ENCODE measurements at regions of chr5 and their contacts with region 1.

Region 1: DNA sequence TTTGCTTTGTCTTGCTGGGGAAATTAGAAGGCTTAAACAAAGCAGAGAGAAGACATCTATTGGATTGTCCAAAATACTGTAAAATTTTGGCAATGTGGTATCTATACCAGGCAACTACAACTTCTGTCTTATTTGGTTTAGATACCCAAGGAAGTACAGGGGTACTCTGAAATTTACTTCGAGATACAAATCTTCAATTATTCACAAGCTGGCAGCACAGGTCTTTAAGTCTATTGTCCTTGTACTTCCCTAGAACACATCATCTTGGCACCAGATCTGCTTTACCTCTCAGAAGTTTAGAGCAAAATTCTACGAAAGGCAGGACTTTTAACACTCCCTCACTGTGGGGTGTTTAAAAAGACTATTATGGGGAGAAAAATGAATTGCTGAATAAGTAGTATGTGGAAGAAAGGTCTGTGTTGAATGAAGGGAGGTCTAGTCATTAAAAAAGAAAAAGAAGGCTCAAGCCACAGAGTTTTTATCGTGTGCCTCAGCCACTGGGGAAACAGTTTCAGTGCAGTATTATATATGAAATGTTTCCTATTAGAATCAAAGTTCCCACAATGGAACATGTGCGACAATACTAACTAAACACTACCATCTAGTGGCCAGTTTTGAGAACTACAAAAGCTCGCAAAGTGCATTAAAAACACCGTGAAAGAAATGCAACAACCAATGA is 93.7 kb downstream of the PDE4D start:
- DNase-seq: no peak
- H3K4me3 ChIP-seq: no peak overlapping the region
- H3K27me3 ChIP-seq: peaks cover under 1% of the 10 kb centered on the region; the same call in 1 of the 2 replicates
- CTCF ChIP-seq: peak; percentile 60

Region 2: DNA sequence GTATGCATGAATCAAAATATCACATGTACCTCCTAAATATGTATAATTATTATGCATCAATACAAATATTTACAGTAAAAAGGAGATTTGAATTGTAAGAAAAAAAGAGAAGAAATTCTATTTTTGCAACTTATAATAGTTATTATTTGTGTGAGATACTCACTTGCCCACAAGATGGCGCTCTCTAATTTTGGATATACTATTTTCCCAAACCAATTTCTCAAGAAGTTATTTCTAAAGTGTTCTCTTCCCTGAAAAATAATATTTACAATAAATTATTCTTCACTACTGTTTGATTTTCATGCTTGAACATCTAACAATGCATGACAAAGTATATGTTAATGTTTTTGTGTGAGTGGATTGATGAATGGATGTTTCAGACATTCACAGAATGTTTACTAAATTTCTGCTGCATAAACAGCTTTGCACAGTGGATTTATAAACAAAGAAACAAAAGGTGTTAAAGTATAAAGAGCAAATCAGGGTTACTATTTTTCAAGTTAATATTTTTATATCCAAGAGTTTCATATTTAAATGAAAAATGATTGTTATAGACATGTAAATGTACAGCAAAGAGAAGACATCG is 409.6 kb before region 1 on chr5:
- CTCF ChIA-PET with region 1: interaction called, 22 read pairs
- POLR2A ChIA-PET with region 1: no interaction called
- DNase-seq: no peak
- H3K4me3 ChIP-seq: no peak overlapping the region
- H3K27me3 ChIP-seq: peaks cover 2% of the 10 kb centered on the region; the same call in 1 of the 2 replicates
- CTCF ChIP-seq: peak; percentile 55

Region 3: GRCh38 chr5:59506285-59506877 is 293.4 kb before region 1 on chr5:
- CTCF ChIA-PET with region 1: interaction called, 22 read pairs
- POLR2A ChIA-PET with region 1: no interaction called
- DNase-seq: no peak
- H3K4me3 ChIP-seq: no peak overlapping the region
- H3K27me3 ChIP-seq: no peaks in the 10 kb centered on the region
- CTCF ChIP-seq: peak; percentile 26; the same call in 1 of the 2 replicates

Region 4: GRCh38 chr5:59583810-59584562 is 215.8 kb before region 1 on chr5:
- CTCF ChIA-PET with region 1: no interaction called
- POLR2A ChIA-PET with region 1: no interaction called
- DNase-seq: no peak
- H3K4me3 ChIP-seq: no peak overlapping the region
- H3K27me3 ChIP-seq: no peaks in the 10 kb centered on the region
- CTCF ChIP-seq: no peak

Region 5: GRCh38 chr5:60026161-60026560 is 226.4 kb after region 1 on chr5:
- CTCF ChIA-PET with region 1: no interaction called
- POLR2A ChIA-PET with region 1: no interaction called
- DNase-seq: peak; percentile 77
- H3K4me3 ChIP-seq: no peak overlapping the region
- H3K27me3 ChIP-seq: no peaks in the 10 kb centered on the region
- CTCF ChIP-seq: no peak

Measured in BJ (cell line).